ENCODE measurements at regions of chr16 and their contacts with region 1.

Region 1: GRCh38 chr16:30429678-30430427 is at the start of gene DCTPP1:
- DNase-seq: peak; percentile 86 to 99 (median 95)
- ATAC-seq: peak; percentile 96 to 98 (median 98)
- H3K4me3 ChIP-seq: peak within 1 kb of the TSS; percentile 72 to 80
- H3K4me3 Mint-ChIP-seq: no peak within 1 kb of the TSS
- H3K27ac ChIP-seq: peak within 1 kb of the TSS; percentile 71
- H3K27ac Mint-ChIP-seq: no peak within 1 kb of the TSS
- H3K4me1 ChIP-seq: peaks cover 9 to 36% of the 10 kb centered on the region in 2 experiments
- H3K4me1 Mint-ChIP-seq: peaks cover 22 to 25% (median 23%) of the 10 kb centered on the region in 3 donors
- H3K27me3 ChIP-seq: no peaks in the 10 kb centered on the region
- H3K27me3 Mint-ChIP-seq: no peaks in the 10 kb centered on the region
- total RNA-seq, gene DCTPP1: 11.2 to 30.6 (median 24.7) TPM

Region 2: GRCh38 chr16:30378236-30379204 is 51.3 kb before region 1 on chr16:
- CTCF ChIA-PET with region 1: interaction called in 1 of 2 experiments, 10 read pairs
- POLR2A ChIA-PET with region 1: no interaction called
- DNase-seq: peak; percentile 97 to 100 (median 99)
- ATAC-seq: peak; percentile 79 to 86 (median 80)
- H3K4me3 ChIP-seq: peak overlapping the region; percentile 62 to 90
- H3K4me3 Mint-ChIP-seq: peak overlapping the region; percentile 97 to 100 (median 99)
- H3K27ac ChIP-seq: peak overlapping the region; percentile 99
- H3K27ac Mint-ChIP-seq: peak overlapping the region; percentile 99 to 100
- H3K4me1 ChIP-seq: peaks cover 24 to 74% of the 10 kb centered on the region in 2 experiments
- H3K4me1 Mint-ChIP-seq: peaks cover 62 to 64% (median 64%) of the 10 kb centered on the region in 3 donors
- H3K27me3 ChIP-seq: no peaks in the 10 kb centered on the region
- H3K27me3 Mint-ChIP-seq: no peaks in the 10 kb centered on the region

Region 3: DNA sequence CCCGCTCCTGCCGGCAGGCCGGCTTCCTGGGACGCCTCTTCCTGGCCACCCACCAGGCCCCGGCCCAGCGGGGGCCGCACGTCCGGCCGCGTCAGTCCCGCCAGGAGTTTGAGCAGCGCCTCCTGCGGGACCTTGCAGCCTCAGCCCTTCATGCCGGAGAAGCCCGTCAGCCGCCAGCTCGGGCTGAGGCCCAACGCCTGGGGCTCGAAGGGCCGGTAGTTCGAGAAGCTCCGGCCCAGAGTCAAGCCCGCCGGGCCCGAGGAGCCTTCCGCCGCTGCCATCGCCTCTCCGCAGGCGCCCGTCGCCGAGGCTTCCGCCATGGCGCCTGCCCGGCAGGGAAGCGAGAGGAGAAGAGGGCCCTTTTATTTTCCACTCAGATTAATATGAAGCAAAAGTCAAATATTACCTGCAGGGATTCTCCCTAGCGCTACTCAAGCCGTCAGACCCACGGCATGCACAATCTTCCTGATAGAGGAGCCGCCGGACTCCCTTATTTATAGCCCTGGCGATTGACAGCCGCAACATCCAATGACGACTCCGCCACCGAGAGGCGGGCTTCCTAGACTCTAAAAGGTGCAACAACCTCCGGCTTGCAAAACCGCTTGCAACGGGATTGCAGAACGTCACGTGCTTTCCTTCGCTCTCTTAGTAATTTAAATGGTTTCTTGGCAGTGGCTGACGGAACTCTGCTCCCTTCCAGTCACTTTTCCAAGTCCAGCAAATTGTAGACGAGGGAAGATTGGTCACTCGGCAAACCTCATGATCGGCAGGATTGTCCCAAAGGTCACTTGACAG is 15.8 kb after region 1 on chr16 and contains the start of gene SEPHS2:
- CTCF ChIA-PET with region 1: interaction called, 8 to 11 read pairs
- POLR2A ChIA-PET with region 1: no interaction called
- DNase-seq: peak; percentile 88 to 99 (median 96)
- ATAC-seq: peak; percentile 96 to 97 (median 96)
- H3K4me3 ChIP-seq: peak within 1 kb of the TSS; percentile 81 to 94
- H3K4me3 Mint-ChIP-seq: peak within 1 kb of the TSS; percentile 85 to 95 (median 90)
- H3K27ac ChIP-seq: peak within 1 kb of the TSS; percentile 71
- H3K27ac Mint-ChIP-seq: peak within 1 kb of the TSS; percentile 93 to 96
- H3K4me1 ChIP-seq: peaks cover 22 to 49% of the 10 kb centered on the region in 2 experiments
- H3K4me1 Mint-ChIP-seq: peaks cover 38 to 50% (median 46%) of the 10 kb centered on the region in 3 donors
- H3K27me3 ChIP-seq: no peaks in the 10 kb centered on the region
- H3K27me3 Mint-ChIP-seq: no peaks in the 10 kb centered on the region
- total RNA-seq, gene SEPHS2: 21.3 to 50.2 (median 47.8) TPM

Region 4: GRCh38 chr16:30499284-30499683 is 69.4 kb after region 1 on chr16:
- CTCF ChIA-PET with region 1: interaction called in 1 of 2 experiments, 13 read pairs
- POLR2A ChIA-PET with region 1: interaction called in 1 of 2 experiments, 7 read pairs
- DNase-seq: no peak
- ATAC-seq: no peak
- H3K4me3 ChIP-seq: no peak overlapping the region
- H3K4me3 Mint-ChIP-seq: no peak overlapping the region
- H3K27ac ChIP-seq: no peak overlapping the region
- H3K27ac Mint-ChIP-seq: peak overlapping the region in 1 of 2 donors; percentile 59
- H3K4me1 ChIP-seq: peaks cover 0 to 13% of the 10 kb centered on the region in 2 experiments
- H3K4me1 Mint-ChIP-seq: peaks cover 2 to 9% (median 7%) of the 10 kb centered on the region in 3 donors
- H3K27me3 ChIP-seq: no peaks in the 10 kb centered on the region
- H3K27me3 Mint-ChIP-seq: no peaks in the 10 kb centered on the region

Region 5: DNA sequence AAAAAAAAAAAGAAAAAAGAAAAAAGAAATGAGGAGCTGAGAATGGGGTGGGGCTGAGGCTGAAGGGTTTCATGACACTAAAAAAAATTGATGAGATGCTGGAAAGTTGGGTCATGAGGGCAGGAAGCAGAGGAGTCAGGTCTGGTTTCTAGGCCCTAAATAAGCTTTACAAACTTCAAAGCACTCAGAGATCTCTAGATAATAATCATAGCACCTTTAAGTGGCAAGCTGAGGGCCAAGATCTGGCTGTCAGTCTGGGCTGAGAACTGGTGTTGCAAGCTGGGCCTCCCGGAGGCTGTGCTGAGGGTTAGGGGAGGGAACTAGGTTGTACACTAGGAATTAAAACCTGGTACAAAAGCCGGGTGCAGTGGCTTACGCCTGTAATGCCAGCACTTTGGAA is 121.9 kb after region 1 on chr16:
- CTCF ChIA-PET with region 1: interaction called in 1 of 2 experiments, 9 read pairs
- POLR2A ChIA-PET with region 1: interaction called in 1 of 2 experiments, 10 read pairs
- DNase-seq: peak in 34 of 35 experiments; percentile 28 to 85 (median 58)
- ATAC-seq: peak; percentile 85 to 92 (median 88)
- H3K4me3 ChIP-seq: peak overlapping the region in 1 of 2 donors; percentile 15
- H3K4me3 Mint-ChIP-seq: peak overlapping the region; percentile 52 to 76 (median 68)
- H3K27ac ChIP-seq: peak overlapping the region; percentile 80
- H3K27ac Mint-ChIP-seq: peak overlapping the region; percentile 94 to 97
- H3K4me1 ChIP-seq: peaks cover 21 to 62% of the 10 kb centered on the region in 2 experiments
- H3K4me1 Mint-ChIP-seq: peaks cover 59 to 67% (median 63%) of the 10 kb centered on the region in 3 donors
- H3K27me3 ChIP-seq: no peaks in the 10 kb centered on the region
- H3K27me3 Mint-ChIP-seq: no peaks in the 10 kb centered on the region

Region 6: DNA sequence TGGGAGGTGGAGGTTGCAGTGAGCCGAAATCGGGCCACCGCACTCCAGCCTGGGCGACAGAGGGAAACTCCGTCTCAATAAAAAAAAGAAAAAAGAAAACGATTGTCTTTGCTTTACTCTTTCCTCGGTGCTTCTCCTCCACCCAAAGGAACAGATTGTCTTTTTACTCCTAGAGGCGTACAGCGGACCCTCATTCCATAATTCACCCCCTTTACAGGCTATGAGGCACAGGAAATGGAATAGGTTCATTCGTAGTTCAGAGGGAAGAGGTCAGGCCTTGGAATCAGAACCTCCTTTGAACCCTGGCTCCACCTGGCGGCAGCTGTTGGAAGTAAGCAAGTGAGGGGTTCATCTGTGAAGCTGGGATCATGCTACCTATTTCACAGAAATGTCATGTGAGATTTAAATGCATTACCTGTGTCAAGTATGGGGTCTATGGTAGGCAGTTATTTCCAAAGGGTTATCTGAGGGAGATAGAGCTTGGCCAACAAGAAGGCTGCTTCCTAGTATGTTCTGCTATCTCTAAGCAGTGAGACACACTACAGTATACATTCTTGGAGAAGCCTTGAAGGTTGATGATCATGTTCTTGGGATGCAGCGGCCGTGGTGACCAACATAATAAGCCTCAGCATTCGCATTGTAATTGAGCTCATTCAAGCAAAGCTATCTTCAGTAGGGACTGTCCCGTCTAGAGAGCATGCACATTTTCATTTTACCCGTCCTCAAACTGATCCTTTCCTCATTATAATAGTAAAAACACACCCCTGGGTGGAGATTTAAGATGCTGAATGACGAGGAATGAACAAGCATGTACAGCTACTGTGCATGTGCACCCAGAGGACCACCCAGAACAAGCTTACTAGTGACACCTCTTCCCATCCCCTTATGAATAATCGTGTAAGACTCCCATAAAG is 199.0 kb after region 1 on chr16:
- CTCF ChIA-PET with region 1: interaction called in 1 of 2 experiments, 17 read pairs
- POLR2A ChIA-PET with region 1: interaction called, 3 to 11 read pairs
- DNase-seq: peak; percentile 63 to 92 (median 81)
- ATAC-seq: peak; percentile 91 to 93 (median 92)
- H3K4me3 ChIP-seq: peak overlapping the region in 1 of 2 donors; percentile 21
- H3K4me3 Mint-ChIP-seq: peak overlapping the region; percentile 55 to 73 (median 58)
- H3K27ac ChIP-seq: peak overlapping the region; percentile 25
- H3K27ac Mint-ChIP-seq: peak overlapping the region; percentile 65 to 83
- H3K4me1 ChIP-seq: peaks cover 2 to 12% of the 10 kb centered on the region in 2 experiments
- H3K4me1 Mint-ChIP-seq: peaks cover 8 to 10% (median 8%) of the 10 kb centered on the region in 3 donors
- H3K27me3 ChIP-seq: peaks cover 0 to 5% of the 10 kb centered on the region in 2 experiments
- H3K27me3 Mint-ChIP-seq: no peaks in the 10 kb centered on the region

Measured in T-cell (primary cell).